Mammary epithelial cell (primary cell): ENCODE measurements at regions of chr11 and their contacts with region 1.

Region 1: GRCh38 chr11:121514432-121515334 is 61.9 kb upstream of the SORL1-AS1 start:
- DNase-seq: no peak
- H3K4me3 ChIP-seq: no peak overlapping the region
- H3K27ac ChIP-seq: no peak overlapping the region
- H3K4me1 ChIP-seq: no peaks in the 10 kb centered on the region
- H3K27me3 ChIP-seq: no peaks in the 10 kb centered on the region
- CTCF ChIP-seq: no peak

Region 2: GRCh38 chr11:121367001-121367843 is 147.5 kb before region 1 on chr11:
- CTCF ChIA-PET with region 1: no interaction called
- dilution Hi-C with region 1: no loop called
- in situ Hi-C with region 1: no loop called
- intact Hi-C with region 1: no loop called
- DNase-seq: peak; percentile 4
- H3K4me3 ChIP-seq: no peak overlapping the region
- H3K27ac ChIP-seq: no peak overlapping the region
- H3K4me1 ChIP-seq: no peaks in the 10 kb centered on the region
- H3K27me3 ChIP-seq: peaks cover 3% of the 10 kb centered on the region
- CTCF ChIP-seq: no peak

Region 3: GRCh38 chr11:121464352-121464946 is 50.2 kb before region 1 on chr11:
- CTCF ChIA-PET with region 1: no interaction called
- dilution Hi-C with region 1: loop called (anchors 5 kb)
- in situ Hi-C with region 1: no loop called
- intact Hi-C with region 1: no loop called
- DNase-seq: peak; percentile 92
- H3K4me3 ChIP-seq: no peak overlapping the region
- H3K27ac ChIP-seq: peak overlapping the region; percentile 87
- H3K4me1 ChIP-seq: peaks cover 50% of the 10 kb centered on the region
- H3K27me3 ChIP-seq: no peaks in the 10 kb centered on the region
- CTCF ChIP-seq: no peak

Region 4: GRCh38 chr11:121722431-121723245 is 208.0 kb after region 1 on chr11:
- CTCF ChIA-PET with region 1: no interaction called
- dilution Hi-C with region 1: no loop called
- in situ Hi-C with region 1: no loop called
- intact Hi-C with region 1: no loop called
- DNase-seq: peak; percentile 22
- H3K4me3 ChIP-seq: peak overlapping the region; percentile 1 to 37 (median 10)
- H3K27ac ChIP-seq: no peak overlapping the region
- H3K4me1 ChIP-seq: peaks cover 8% of the 10 kb centered on the region
- H3K27me3 ChIP-seq: no peaks in the 10 kb centered on the region
- CTCF ChIP-seq: no peak